ENCODE measurements at regions of chr3 and their contacts with region 1.

Region 1: DNA sequence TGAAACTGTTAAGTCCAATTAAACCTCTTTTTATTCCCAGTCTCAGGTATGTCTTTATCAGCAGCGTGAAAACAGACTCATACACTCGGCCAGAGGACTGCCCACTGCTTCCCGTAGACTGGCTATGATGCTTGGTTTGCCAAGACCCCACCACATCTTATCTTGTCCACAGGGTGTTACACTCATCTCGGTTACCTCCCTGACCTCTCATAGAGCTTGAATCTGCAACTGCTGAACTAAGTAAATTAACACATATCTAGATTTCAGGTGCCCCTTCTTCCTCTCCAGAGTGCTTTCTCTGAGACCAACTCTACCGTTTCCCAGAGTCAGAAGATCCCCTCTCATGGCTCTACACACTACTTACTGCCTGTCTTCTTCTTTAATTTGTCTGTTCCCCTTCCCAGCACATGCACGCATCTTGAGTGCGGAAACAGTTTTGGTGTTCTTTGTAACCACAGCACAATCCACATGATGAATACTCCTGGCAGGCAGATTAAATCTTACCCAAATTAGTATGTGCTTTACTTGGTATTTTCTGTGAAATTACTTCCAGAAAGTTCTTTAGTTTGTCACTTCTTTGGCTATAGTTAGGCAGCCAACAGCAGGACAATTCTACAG is 49.7 kb downstream of the CD200 start:
- DNase-seq: no peak
- H3K4me3 Mint-ChIP-seq: no peak overlapping the region
- H3K27ac Mint-ChIP-seq: peak overlapping the region; percentile 59
- H3K4me1 Mint-ChIP-seq: peaks cover 43% of the 10 kb centered on the region
- H3K27me3 Mint-ChIP-seq: no peaks in the 10 kb centered on the region

Region 2: GRCh38 chr3:111652492-111653180 is 730.0 kb before region 1 on chr3:
- intact Hi-C with region 1: no loop called
- DNase-seq: no peak
- H3K4me3 Mint-ChIP-seq: no peak overlapping the region
- H3K27ac Mint-ChIP-seq: no peak overlapping the region
- H3K4me1 Mint-ChIP-seq: peaks cover 16% of the 10 kb centered on the region
- H3K27me3 Mint-ChIP-seq: no peaks in the 10 kb centered on the region

Region 3: GRCh38 chr3:112394141-112394631 is 11.5 kb after region 1 on chr3:
- intact Hi-C with region 1: no loop called
- DNase-seq: no peak
- H3K4me3 Mint-ChIP-seq: no peak overlapping the region
- H3K27ac Mint-ChIP-seq: no peak overlapping the region
- H3K4me1 Mint-ChIP-seq: peaks cover 51% of the 10 kb centered on the region
- H3K27me3 Mint-ChIP-seq: no peaks in the 10 kb centered on the region

Region 4: DNA sequence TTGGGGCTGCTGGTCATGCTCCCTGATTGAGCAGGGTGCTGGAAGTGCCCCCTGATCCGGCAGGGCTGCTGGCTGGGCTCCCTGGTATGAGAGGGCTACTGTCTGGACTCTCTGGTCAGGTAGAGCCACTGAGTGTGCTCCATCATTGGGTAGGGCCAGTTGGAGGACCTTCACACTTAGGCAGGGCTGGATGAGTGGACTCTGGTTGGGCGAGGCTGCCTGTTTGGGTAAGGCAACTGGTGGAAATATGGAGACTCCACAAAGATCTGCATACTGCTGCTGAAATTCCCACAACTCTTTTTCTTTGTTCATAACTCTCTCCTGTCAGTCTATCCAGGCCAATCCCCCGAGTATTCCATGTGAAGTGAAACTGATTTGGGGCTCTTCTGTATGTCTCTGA is 31.1 kb after region 1 on chr3:
- intact Hi-C with region 1: loop called (anchors 1 kb)
- DNase-seq: no peak
- H3K4me3 Mint-ChIP-seq: no peak overlapping the region
- H3K27ac Mint-ChIP-seq: no peak overlapping the region
- H3K4me1 Mint-ChIP-seq: peaks cover 10% of the 10 kb centered on the region
- H3K27me3 Mint-ChIP-seq: peaks cover 3% of the 10 kb centered on the region

Region 5: DNA sequence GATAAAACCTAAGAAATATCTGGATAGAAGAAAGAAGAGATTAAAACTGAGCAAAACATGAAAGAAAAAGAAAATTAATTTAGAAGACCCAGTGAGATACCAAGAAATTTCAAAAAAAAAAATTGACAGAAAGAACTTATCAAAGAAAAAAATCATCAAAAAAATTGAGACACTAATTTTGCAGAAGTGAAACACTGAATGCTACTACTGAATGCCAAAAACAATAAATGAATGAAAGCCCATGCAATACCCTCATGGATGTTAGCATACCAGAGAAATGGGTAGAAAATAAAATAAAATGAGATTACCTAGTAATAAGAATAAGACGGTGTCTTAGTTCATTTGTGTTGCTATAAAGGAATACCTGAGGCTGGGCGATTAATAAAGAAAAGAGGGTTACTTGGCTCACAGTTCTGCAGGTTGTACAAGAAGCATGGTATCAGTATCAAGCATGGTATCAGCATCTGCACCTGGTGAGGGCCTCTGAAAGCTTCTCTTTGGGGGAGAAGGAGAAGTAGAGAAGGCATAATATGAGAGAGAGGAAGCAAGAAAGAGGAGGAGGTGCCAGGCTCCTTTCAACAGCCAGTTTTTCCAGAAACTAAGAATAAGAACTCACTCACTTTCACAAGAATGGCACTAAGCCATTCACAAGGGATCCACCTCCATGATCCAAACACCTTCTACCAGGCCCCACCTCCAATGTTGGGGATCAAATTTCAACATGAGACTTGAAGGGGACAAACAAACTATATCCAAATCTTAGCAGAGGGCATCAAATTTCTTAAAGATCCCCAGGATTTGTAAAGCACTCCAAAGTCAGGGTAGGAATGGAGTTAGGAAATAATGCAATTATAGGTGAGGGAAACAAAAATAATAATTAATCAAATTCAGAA is 43.5 kb after region 1 on chr3:
- intact Hi-C with region 1: no loop called
- DNase-seq: no peak
- H3K4me3 Mint-ChIP-seq: no peak overlapping the region
- H3K27ac Mint-ChIP-seq: no peak overlapping the region
- H3K4me1 Mint-ChIP-seq: no peaks in the 10 kb centered on the region
- H3K27me3 Mint-ChIP-seq: peaks cover 2% of the 10 kb centered on the region

Region 6: GRCh38 chr3:112448939-112449338 is 66.3 kb after region 1 on chr3:
- intact Hi-C with region 1: no loop called
- DNase-seq: no peak
- H3K4me3 Mint-ChIP-seq: no peak overlapping the region
- H3K27ac Mint-ChIP-seq: no peak overlapping the region
- H3K4me1 Mint-ChIP-seq: peaks cover 5% of the 10 kb centered on the region
- H3K27me3 Mint-ChIP-seq: no peaks in the 10 kb centered on the region

Measured in activated T-helper 1 cell treated with anti-CD3 and anti-CD28 coated beads, Interleukin-12 subunit alpha, Interleukin-12 subunit beta, Interleukin-2, Interleukin-4 antibody, amounts not matched to agents 30 ng/mL and 10 ng/mL and 1 ng/mL, durations not matched to agents 14 hours and 24 hours and 36 hours (primary cell).